Heart right ventricle (tissue), 16 donors: ENCODE measurements at regions of chr5 and their contacts with region 1.

Region 1: DNA sequence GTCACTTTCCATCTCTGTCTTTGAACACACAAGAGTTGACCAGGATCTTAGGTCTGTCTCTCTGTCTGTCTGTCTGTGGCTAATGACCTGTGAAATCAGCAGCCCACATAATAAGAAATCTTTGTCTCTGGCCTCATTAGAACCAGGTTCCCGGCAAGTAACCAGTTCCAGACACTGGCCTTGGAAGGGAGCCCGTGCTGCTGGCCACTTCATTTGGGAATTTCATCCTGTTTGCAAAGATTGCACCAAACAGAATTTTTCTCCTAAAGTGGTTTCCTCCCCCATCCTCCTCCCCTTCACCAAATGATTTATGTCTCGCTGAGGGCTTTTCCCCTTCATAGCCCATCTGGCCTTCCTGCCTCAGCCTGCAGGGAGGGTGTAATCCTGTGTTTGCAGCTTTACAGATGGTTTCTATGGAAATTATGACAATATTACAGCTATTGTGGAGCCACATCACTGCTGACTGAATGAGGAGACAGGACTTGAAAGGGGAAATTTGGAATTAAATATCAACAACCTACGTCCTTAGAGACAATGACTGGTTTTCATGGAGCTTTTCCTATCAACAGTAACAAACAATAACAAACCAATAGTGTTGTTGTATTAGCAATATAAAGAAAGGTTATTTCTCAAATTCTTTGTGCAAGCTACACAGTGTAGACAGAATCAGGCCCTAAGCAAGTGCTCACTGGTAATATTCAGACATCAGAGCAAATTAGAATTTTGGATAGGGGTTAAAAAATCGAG is 25.7 kb downstream of the DPYSL3 start:
- DNase-seq: peak; percentile 54 to 74
- ATAC-seq: peak; percentile 78 to 92 (median 87)
- H3K4me3 ChIP-seq: no peak overlapping the region
- H3K27ac ChIP-seq: peak overlapping the region; percentile 62 to 93 (median 72)
- H3K4me1 ChIP-seq: peaks cover 9 to 86% (median 64%) of the 10 kb centered on the region in 9 donors
- H3K27me3 ChIP-seq: peaks cover 0 to 5% (median 0%) of the 10 kb centered on the region in 7 donors
- CTCF ChIP-seq: no peak

Region 2: GRCh38 chr5:147504011-147504410 is 19.9 kb after region 1 on chr5:
- intact Hi-C with region 1: loop called in 1 of 10 experiments (anchors 2 kb)
- DNase-seq: peak in 1 of 2 donors; percentile 59
- ATAC-seq: peak in 7 of 8 donors; percentile 40 to 80 (median 61)
- H3K4me3 ChIP-seq: no peak overlapping the region
- H3K27ac ChIP-seq: peak overlapping the region in 9 of 10 donors; percentile 31 to 96 (median 62)
- H3K4me1 ChIP-seq: peaks cover 0 to 38% (median 18%) of the 10 kb centered on the region in 9 donors
- H3K27me3 ChIP-seq: peaks cover 0 to 8% (median 0%) of the 10 kb centered on the region in 7 donors
- CTCF ChIP-seq: no peak